ENCODE measurements at regions of chr10 and their contacts with region 1.

Region 1: DNA sequence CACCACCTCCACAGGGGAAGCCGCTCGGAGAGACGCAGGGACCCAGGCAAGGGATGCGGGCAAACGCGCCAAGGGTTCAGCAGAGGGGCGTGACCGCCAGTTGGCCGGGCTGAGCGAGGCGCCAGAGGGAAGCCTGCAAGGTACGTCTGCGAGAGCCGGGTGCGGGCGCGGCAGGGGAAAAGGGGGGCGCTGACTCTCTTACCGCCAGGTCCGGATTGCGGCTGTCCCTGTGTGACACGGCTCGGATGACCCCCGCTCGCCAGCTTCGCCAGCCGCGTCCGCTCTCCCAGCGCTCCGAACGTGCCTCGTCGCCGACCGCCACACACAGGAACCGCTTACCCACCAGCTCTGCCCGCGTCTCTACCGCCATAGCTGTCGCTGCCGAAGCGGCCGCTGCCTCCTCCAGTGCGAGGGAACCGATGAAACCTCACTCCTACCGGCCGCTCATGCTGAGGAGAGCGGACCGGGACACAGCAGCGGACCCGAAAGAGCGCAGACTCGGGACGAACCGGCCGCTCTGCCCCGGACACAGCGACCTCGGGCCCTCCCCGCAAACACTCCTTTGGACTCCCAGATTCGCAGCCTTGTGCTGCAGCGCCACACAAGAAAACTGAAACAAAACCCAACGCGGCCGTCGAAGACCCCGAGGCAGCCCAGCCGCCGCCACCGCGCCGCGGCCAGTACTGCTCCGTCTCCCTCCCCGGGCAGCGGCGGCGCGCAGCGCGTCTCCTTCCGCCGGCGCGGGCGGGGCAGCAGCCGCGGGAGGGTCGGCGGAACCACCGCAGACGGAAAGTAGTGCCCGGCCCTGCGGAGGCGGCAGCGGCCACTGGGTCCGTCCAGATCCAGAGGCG is at the start of gene JMJD1C:
- DNase-seq: no peak
- H3K4me3 ChIP-seq: peak within 1 kb of the TSS; percentile 74 to 86 (median 83)
- H3K27ac ChIP-seq: peak within 1 kb of the TSS; percentile 88 to 94 (median 91)
- H3K4me1 ChIP-seq: peaks cover 13 to 30% (median 26%) of the 10 kb centered on the region in 4 donors
- H3K27me3 ChIP-seq: no peaks in the 10 kb centered on the region
- CTCF ChIP-seq: no peak
- EP300 ChIP-seq: no peak
- POLR2A ChIP-seq: peak; percentile 30
- total RNA-seq, gene JMJD1C: 60.3 to 89.7 (median 79.8) TPM

Region 2: GRCh38 chr10:63128443-63128842 is 337.1 kb before region 1 on chr10:
- intact Hi-C with region 1: no loop called
- DNase-seq: no peak
- H3K4me3 ChIP-seq: no peak overlapping the region
- H3K27ac ChIP-seq: no peak overlapping the region
- H3K4me1 ChIP-seq: no peaks in the 10 kb centered on the region
- H3K27me3 ChIP-seq: no peaks in the 10 kb centered on the region
- CTCF ChIP-seq: no peak
- EP300 ChIP-seq: no peak
- POLR2A ChIP-seq: no peak

Region 3: DNA sequence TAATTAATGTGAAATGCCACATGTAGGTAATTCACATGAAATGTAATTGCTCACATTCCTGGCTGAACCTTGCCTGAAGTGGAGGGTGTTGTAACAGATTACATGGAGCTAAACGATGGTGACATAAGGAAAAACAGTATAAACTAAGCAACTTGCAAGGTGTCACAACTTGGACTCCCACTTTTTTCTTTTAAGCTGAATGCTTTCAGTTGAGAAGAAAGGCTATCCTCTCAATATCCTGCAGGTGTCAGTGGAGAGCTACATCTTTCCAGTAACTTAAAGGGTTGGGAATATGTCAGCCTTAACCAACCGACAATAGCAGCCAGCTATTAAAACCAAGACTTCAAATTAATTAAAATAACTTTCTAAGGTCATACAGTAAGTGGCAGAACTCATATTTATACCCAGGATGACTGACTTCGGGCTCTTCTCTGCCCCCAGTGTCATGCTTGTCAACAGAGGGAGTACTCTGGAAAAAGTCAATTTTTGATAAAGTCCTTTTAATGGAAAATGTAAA is 298.7 kb before region 1 on chr10:
- intact Hi-C with region 1: loop called (anchors 5 kb)
- DNase-seq: no peak
- H3K4me3 ChIP-seq: no peak overlapping the region
- H3K27ac ChIP-seq: peak overlapping the region in 2 of 4 donors; percentile 12 to 46
- H3K4me1 ChIP-seq: peaks cover 15 to 53% (median 50%) of the 10 kb centered on the region in 4 donors
- H3K27me3 ChIP-seq: no peaks in the 10 kb centered on the region
- CTCF ChIP-seq: peak; percentile 83 to 88 (median 86)
- EP300 ChIP-seq: no peak
- POLR2A ChIP-seq: no peak

Region 4: GRCh38 chr10:63206997-63207811 is 258.3 kb before region 1 on chr10:
- intact Hi-C with region 1: loop called (anchors 5 kb)
- DNase-seq: no peak
- H3K4me3 ChIP-seq: peak overlapping the region; percentile 4 to 34 (median 27)
- H3K27ac ChIP-seq: peak overlapping the region; percentile 56 to 77 (median 70)
- H3K4me1 ChIP-seq: peaks cover 52 to 65% (median 60%) of the 10 kb centered on the region in 4 donors
- H3K27me3 ChIP-seq: no peaks in the 10 kb centered on the region
- CTCF ChIP-seq: no peak
- EP300 ChIP-seq: no peak
- POLR2A ChIP-seq: no peak

Region 5: GRCh38 chr10:63515002-63515763 is 49.7 kb after region 1 on chr10:
- intact Hi-C with region 1: loop called (anchors 5 kb)
- DNase-seq: no peak
- H3K4me3 ChIP-seq: peak overlapping the region in 1 of 4 donors; percentile 4
- H3K27ac ChIP-seq: peak overlapping the region; percentile 51 to 64 (median 56)
- H3K4me1 ChIP-seq: peaks cover 17 to 53% (median 45%) of the 10 kb centered on the region in 4 donors
- H3K27me3 ChIP-seq: no peaks in the 10 kb centered on the region
- CTCF ChIP-seq: no peak
- EP300 ChIP-seq: no peak
- POLR2A ChIP-seq: no peak

Region 6: DNA sequence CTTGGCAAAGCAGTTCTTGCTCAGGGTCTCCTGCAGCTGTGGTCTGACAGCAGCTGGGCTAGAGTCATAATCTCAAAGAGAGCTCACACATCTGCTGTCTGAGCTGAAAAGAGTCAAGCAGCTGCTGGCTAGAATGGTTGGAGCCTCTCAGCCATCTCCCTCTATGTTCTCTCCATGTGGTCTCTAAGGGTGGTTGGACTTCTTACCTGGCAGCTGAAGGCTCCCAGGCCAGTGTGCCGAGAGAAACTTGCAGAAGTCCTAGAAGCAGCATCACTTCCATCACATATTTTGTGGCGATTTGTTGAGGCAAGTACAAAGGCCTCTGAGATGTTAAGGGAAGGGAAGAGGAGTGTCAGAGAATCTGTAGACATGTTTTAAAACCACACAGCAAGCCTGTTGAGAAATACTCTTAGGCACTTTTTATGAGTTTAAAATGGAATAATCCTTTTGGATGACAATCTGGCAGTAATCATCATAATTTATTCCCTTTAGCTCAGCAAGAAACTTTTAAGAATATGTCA is 148.9 kb after region 1 on chr10:
- intact Hi-C with region 1: no loop called
- DNase-seq: no peak
- H3K4me3 ChIP-seq: no peak overlapping the region
- H3K27ac ChIP-seq: peak overlapping the region in 2 of 4 donors; percentile 31 to 55
- H3K4me1 ChIP-seq: peaks cover 0 to 10% (median 7%) of the 10 kb centered on the region in 4 donors
- H3K27me3 ChIP-seq: no peaks in the 10 kb centered on the region
- CTCF ChIP-seq: no peak
- EP300 ChIP-seq: no peak
- POLR2A ChIP-seq: no peak

Region 7: GRCh38 chr10:63720072-63720537 is 254.6 kb after region 1 on chr10:
- intact Hi-C with region 1: loop called (anchors 5 kb)
- DNase-seq: no peak
- H3K4me3 ChIP-seq: no peak overlapping the region
- H3K27ac ChIP-seq: peak overlapping the region in 2 of 4 donors; percentile 5 to 68
- H3K4me1 ChIP-seq: peaks cover 16 to 41% (median 27%) of the 10 kb centered on the region in 4 donors
- H3K27me3 ChIP-seq: no peaks in the 10 kb centered on the region
- CTCF ChIP-seq: peak; percentile 96 to 99 (median 99)
- EP300 ChIP-seq: no peak
- POLR2A ChIP-seq: no peak

Region 8: DNA sequence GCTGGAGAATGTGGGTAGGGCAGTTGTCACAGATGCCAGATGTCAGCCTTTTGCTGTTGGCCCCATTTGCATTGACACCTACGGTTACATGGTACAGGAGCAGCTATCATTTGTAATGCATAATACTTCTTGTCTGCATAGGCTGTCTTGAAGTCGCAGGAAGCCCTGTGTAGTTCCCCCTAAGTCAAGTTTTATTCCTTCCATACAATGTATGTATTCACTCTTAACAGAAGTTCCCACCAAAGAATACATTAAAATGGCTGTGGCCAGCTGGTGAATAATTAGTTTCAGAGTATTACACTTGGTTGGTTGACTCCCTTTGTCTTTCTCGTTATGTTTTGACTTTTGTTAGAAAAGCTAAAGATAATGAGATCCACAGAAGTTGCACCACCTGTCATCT is 1224.7 kb after region 1 on chr10:
- intact Hi-C with region 1: no loop called
- DNase-seq: no peak
- H3K4me3 ChIP-seq: no peak overlapping the region
- H3K27ac ChIP-seq: no peak overlapping the region
- H3K4me1 ChIP-seq: no peaks in the 10 kb centered on the region
- H3K27me3 ChIP-seq: no peaks in the 10 kb centered on the region
- CTCF ChIP-seq: no peak
- EP300 ChIP-seq: no peak
- POLR2A ChIP-seq: no peak

Measured in esophagus muscularis mucosa (tissue), 4 donors.